Mammary epithelial cell (primary cell): ENCODE measurements at regions of chr1 and their contacts with region 1.

Region 1: GRCh38 chr1:40338745-40339424 is 21.8 kb upstream of the COL9A2 start:
- DNase-seq: peak; percentile 60
- H3K4me3 ChIP-seq: no peak overlapping the region
- H3K27ac ChIP-seq: no peak overlapping the region
- H3K4me1 ChIP-seq: peaks cover 3% of the 10 kb centered on the region
- H3K27me3 ChIP-seq: no peaks in the 10 kb centered on the region
- CTCF ChIP-seq: peak; percentile 99 to 100

Region 2: GRCh38 chr1:40079774-40080400 is 259.0 kb before region 1 on chr1:
- CTCF ChIA-PET with region 1: no interaction called
- dilution Hi-C with region 1: loop called (anchors 25 kb)
- in situ Hi-C with region 1: no loop called
- intact Hi-C with region 1: loop called (anchors 1 kb)
- DNase-seq: no peak
- H3K4me3 ChIP-seq: no peak overlapping the region
- H3K27ac ChIP-seq: no peak overlapping the region
- H3K4me1 ChIP-seq: peaks cover 7% of the 10 kb centered on the region
- H3K27me3 ChIP-seq: no peaks in the 10 kb centered on the region
- CTCF ChIP-seq: no peak

Region 3: DNA sequence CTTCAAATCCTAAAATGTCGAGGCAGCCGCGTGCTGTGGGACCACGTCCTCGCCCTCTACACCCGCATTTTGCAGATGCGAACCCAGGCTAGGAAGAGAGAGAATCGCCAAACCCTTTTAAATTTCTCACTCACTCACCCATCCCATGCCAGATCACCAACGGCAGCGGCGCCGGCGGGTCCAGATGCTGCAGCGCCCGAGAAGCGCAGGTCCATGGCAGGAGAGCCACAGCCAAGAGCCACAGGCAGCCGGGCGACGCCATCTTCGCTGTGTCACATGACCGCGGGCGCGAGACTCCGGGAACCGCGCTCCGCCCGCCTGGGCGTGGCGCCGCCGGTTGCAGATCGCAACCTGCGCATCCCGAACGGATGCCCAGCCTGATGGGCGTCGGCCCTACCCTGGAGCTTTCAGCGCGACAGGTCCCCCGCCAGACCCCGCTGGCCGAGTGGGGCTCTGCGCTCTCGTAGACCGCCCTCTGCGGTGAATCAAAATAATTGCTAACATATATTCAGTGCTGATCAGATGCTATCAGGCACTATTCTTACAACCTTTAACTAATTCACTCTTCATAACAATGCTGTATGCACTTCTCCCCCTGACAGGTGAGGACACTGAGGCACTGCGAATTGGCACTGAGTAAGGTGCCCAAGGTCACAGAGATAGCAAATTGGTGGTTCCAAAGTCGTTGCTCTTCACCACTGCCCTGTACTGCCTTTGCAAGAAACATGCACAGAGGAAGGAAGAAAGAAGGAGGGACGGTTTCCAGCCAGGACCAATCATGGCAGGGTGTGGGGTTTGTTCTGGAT is 241.7 kb before region 1 on chr1 and contains the start of gene PPT1:
- CTCF ChIA-PET with region 1: no interaction called
- dilution Hi-C with region 1: loop called (anchors 25 kb)
- in situ Hi-C with region 1: no loop called
- intact Hi-C with region 1: no loop called
- DNase-seq: peak; percentile 71
- H3K4me3 ChIP-seq: peak within 1 kb of the TSS; percentile 65 to 76 (median 71)
- H3K27ac ChIP-seq: no peak within 1 kb of the TSS
- H3K4me1 ChIP-seq: peaks cover 9% of the 10 kb centered on the region
- H3K27me3 ChIP-seq: no peaks in the 10 kb centered on the region
- CTCF ChIP-seq: peak in 1 of 2 donors; percentile 24
- total RNA-seq, gene PPT1: 22.5 to 36.9 TPM

Region 4: DNA sequence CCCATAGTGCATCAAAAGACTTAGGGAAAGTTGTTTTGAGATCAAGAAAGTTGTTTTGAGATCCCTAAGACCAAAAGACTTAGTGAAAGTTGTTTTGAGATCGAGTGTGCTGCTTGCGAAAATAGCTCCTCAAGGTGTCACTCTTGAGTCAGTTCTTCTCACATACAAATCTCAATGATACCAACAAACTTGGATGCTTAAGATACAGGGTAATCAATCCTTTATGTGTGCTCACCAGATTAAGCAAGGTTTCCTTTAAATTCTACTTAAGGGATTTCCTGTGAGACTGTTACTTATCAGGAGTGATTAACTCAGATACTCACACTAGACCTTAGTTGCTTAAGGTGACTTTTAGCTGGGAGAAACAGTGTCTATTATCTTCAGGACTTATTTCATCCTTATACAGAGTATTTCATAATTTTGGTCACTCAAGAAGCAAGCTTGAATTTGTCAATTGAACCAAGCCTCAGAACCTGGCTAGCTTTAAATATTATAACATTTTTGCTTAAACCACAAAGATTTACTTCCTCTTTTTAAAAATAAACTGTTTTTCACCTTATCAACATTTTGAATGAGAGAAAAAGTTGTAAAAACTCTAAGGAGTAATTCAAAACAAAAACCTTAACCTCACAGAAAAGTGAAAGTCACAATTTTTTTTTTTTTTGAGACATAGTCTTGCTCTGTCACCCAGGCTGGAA is 185.7 kb before region 1 on chr1:
- CTCF ChIA-PET with region 1: interaction called, 4 read pairs
- dilution Hi-C with region 1: loop called (anchors 5 kb)
- in situ Hi-C with region 1: loop called (anchors 5 kb)
- intact Hi-C with region 1: loop called (anchors 1 kb)
- DNase-seq: peak; percentile 40
- H3K4me3 ChIP-seq: peak overlapping the region in 1 of 3 experiments; percentile 23
- H3K27ac ChIP-seq: no peak overlapping the region
- H3K4me1 ChIP-seq: no peaks in the 10 kb centered on the region
- H3K27me3 ChIP-seq: no peaks in the 10 kb centered on the region
- CTCF ChIP-seq: peak; percentile 71 to 80

Region 5: GRCh38 chr1:40799351-40799867 is 460.5 kb after region 1 on chr1:
- CTCF ChIA-PET with region 1: no interaction called
- dilution Hi-C with region 1: no loop called
- in situ Hi-C with region 1: no loop called
- intact Hi-C with region 1: no loop called
- DNase-seq: no peak
- H3K4me3 ChIP-seq: no peak overlapping the region
- H3K27ac ChIP-seq: no peak overlapping the region
- H3K4me1 ChIP-seq: peaks cover 5% of the 10 kb centered on the region
- H3K27me3 ChIP-seq: no peaks in the 10 kb centered on the region
- CTCF ChIP-seq: no peak